ENCODE measurements at regions of chr11 and their contacts with region 1.

Region 1: DNA sequence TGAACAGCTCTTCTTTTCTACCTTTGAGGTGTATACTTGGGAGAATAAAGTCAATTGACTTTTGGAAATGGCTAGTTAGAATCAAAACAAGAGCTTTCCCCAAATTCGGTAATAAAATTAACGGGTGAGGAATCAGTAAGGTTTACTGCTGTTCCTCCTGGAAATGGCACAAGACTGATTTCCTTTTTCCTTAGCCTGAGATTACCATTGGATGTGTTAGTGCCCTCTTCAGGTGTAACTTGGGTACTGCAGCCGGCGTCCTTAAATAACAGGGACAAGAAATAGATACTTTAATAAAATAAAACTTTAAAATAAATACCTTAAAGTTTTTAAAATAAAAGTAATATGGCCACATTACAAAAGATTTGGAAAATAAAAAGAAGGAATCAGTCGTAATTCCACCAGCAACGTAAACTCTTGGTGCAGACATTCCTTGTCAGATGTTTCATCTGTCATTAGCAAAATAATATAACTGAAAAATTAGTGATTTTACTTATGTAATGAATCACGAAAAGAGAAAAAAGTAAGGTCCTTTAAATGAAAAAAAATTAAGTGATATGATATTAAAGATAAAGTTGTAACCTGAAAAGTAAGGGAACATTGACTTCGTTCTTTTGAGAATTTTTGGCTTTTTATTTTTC is 29.7 kb downstream of the ZFTA start:
- DNase-seq: peak; percentile 81
- H3K4me3 ChIP-seq: no peak overlapping the region
- H3K27ac ChIP-seq: no peak overlapping the region
- H3K4me1 ChIP-seq: no peaks in the 10 kb centered on the region
- H3K27me3 ChIP-seq: no peaks in the 10 kb centered on the region
- CTCF ChIP-seq: peak; percentile 98

Region 2: DNA sequence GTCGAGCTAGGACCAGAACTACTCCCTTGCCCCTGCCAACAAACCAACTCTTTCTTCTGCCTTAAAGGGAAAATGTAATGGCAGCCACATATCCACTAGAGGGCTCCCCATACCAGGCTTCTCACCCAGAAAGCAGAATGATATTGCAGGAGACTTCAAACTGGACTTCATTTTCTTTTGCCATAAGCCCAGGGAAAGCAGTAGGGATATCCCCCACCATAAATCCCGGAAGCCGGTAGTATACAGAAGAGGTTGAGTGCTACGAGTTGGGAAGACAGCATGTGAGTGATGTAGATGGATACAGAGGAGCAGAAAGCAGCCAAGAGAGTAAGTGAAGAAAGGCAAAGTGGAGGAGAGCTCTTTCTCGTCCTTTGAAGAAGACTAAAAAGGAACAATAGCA is 259.9 kb before region 1 on chr11:
- intact Hi-C with region 1: loop called (anchors 5 kb)
- DNase-seq: peak; percentile 64
- H3K4me3 ChIP-seq: no peak overlapping the region
- H3K27ac ChIP-seq: no peak overlapping the region
- H3K4me1 ChIP-seq: no peaks in the 10 kb centered on the region
- H3K27me3 ChIP-seq: no peaks in the 10 kb centered on the region
- CTCF ChIP-seq: peak; percentile 93

Region 3: DNA sequence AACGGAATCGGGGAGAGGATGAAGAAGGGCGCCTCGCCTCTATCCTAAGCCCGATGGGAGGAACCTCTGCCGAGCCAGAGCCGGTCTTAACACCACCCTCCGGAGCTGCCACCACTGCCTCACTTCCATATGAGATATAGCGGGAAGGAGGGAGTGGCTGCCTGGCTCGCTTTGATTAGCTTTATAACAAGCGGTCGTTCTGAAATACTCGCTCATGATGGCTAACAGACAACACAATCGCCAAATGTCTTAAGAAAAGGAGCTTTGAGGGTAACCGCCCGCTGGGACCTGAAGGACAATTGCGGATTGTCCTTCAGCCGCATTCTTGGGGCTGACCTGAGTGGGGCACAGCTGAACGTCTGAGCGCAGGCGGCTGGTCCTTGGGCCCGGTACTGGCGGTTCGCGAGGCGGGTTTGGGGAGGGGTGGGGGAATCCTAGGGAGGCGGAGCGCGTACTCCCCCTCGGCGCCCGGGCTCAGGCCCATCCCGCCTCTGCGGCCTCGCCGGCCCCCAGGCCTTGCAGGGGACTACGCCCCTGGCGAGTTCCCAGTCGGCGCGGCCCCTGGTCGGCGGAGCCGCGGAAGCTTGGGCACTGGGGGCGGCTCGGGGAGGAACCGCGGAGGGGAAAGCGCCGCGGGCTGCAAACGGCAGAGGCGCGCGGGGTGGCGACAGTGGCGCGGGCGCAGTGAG is 248.1 kb before region 1 on chr11 and contains the start of gene PLAAT5:
- intact Hi-C with region 1: no loop called
- DNase-seq: peak; percentile 27
- H3K4me3 ChIP-seq: peak within 1 kb of the TSS; percentile 42
- H3K27ac ChIP-seq: peak within 1 kb of the TSS; percentile 20
- H3K4me1 ChIP-seq: no peaks in the 10 kb centered on the region
- H3K27me3 ChIP-seq: peaks cover 9% of the 10 kb centered on the region
- CTCF ChIP-seq: no peak
- total RNA-seq, gene PLAAT5: 0.40 TPM in 1 of 2 donors, not detected in the other

Region 4: DNA sequence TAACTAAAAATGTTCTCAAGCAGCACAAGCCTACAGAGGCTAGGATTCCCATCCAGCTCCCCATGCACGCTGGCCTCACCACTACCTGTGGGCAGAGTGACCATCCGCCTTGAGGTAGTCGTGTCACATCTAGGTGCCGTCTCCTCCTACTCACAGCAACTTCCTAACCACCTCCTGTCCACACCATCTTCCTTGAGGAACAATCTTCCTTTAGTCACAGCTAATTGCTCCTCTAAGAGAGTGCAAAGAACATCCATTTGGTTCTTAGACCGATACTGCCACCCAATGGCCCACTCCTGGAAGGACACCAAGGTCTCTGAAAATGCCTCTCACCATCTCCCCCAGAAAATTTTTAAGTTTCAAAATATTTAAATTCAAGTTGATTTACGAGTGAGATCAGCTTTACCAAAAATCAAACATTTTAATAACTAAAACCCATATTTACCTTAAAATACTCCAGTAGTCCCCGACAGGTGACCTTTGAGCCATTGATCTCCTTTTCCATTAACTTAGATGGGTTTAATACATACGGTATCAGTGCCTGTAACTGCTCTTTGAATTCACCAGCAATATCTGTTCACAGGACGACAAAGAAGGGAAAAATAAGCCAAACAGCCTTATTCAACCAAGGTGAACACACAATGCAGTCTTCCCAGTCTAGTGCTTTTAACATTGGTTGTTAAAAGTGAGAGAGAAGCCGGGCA is 102.9 kb before region 1 on chr11:
- intact Hi-C with region 1: loop called (anchors 5 kb)
- DNase-seq: peak; percentile 66
- H3K4me3 ChIP-seq: no peak overlapping the region
- H3K27ac ChIP-seq: no peak overlapping the region
- H3K4me1 ChIP-seq: peaks cover 2% of the 10 kb centered on the region
- H3K27me3 ChIP-seq: no peaks in the 10 kb centered on the region
- CTCF ChIP-seq: peak; percentile 89

Region 5: GRCh38 chr11:63667995-63668795 is 70.6 kb before region 1 on chr11:
- intact Hi-C with region 1: loop called (anchors 10 kb)
- DNase-seq: no peak
- H3K4me3 ChIP-seq: no peak overlapping the region
- H3K27ac ChIP-seq: no peak overlapping the region
- H3K4me1 ChIP-seq: peaks cover 5% of the 10 kb centered on the region
- H3K27me3 ChIP-seq: no peaks in the 10 kb centered on the region
- CTCF ChIP-seq: no peak